ENCODE measurements at regions of chr1 and their contacts with region 1.

Region 1: DNA sequence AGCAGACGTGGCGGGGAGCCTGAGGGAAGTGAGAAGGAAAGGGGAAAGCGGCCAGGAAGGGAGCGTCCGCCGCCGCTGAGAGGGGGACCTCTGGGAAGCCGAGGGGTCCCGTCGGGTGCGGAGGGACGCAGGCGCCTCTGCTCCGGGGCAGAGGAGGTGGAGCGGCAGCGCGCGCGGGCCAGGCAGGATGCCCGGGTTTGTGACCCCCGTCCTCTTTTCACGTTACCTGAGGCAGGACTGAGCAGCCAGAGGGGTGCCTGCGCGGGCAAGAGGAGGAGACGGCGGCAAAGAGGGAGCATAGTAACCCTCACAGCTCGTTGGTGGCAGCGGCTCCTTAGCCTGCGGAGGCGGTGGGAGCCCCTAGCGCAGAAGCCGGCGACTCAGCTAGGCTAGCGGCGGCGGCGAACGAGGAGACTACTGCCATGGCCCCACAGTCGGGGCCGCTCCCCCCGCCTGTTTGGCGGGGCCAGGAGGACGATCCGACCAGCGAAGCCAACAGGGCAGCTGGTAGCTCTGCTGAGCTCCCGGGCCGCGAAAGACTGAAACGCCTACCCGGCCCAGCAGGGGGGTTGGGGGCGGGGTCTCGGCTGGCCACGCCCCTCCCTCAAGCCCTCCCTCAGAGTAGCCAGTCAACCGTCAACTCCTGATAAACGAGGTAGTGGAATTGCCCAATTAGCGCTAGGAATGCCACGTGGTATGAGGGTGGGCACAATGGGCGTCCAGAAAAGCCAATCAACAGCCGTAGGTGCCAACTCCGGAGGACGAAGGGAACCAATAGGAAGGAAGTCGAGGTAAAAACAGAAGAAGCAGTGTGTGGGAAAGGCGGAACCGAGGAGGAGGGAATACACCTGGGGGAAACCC is at the start of gene TESK2:
- DNase-seq: peak; percentile 97
- ATAC-seq: peak; percentile 99
- total RNA-seq, gene TESK2: 14.3 TPM

Region 2: DNA sequence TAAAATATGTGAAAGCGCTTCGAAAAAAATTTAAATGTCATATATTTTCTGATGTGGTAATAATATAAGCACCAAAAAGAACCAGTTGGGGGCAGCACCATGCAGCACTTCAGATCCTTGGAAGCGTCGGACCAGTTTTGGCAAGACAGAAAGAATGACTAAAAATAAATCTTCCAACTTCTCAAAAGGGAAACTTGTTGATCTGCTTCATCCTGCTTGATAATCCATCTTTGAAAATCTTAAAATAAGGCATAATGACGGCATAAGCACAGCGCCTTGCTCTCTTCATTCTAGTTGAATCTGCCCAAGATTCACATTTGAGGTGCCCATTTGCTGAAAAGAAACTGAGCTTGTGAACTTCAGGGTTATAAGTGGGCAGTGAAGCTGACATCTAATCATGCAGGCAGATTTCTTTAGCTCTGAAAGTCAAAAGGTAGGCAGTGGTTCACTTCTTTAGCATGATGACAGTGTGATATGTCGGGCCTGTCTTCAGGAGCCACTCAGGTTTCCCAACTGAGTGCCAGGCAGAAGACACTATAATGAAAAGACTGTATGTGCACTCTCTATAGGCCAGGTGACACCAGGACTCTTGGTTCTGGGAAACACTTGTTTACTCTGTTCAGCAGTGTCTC is 130.9 kb before region 1 on chr1:
- intact Hi-C with region 1: loop called (anchors 5 kb)
- DNase-seq: peak; percentile 85
- ATAC-seq: peak; percentile 90